ENCODE measurements at regions of chr5 and their contacts with region 1.

Region 1: DNA sequence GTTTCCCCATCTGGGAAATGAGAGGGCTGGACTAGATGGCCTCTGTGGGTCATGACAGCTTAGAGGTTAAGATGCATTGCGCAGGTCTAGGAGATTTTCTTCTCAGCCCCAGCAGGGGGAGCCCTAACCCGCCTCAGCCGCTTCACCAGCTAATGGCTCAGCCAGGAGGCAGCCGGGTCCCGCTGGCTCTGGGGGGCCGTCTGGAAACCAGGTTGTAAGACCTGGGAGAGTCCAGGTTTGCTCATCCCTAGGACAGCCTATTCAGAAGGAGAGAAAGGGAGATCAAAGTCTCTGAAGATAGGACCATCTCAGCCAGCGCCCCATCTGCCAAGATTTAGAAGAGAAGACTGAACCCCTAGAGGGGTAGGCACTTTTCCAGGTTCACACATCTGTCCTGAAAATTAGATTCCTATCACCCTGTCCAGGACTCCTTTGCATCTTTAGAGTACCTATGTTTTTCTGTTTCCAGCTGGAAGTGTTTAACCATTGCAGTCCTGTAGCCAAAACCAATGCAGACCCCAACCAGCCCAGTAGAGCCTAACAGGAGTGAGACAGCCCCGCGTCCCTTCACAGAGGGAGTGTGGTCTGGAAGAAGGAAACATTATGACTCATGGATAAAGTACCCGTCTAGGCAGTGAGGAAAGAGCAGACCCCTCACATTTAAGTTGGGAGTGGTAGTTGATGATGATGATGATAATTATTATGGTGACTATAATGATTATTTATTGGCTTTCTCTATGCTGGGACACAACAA is 27.5 kb downstream of the SPARC start:
- DNase-seq: peak; percentile 81
- H3K4me3 ChIP-seq: peak overlapping the region in 1 of 2 experiments; percentile 27; a peak in 1 of 4 replicates
- H3K27ac ChIP-seq: peak overlapping the region in 1 of 2 experiments; percentile 97; a peak in 2 of 4 replicates
- H3K4me1 ChIP-seq: peaks cover 5 to 12% of the 10 kb centered on the region in 2 experiments; a peak in 2 of 4 replicates
- H3K27me3 ChIP-seq: no peaks in the 10 kb centered on the region
- CTCF ChIP-seq: peak; percentile 89
- EP300 ChIP-seq: no peak
- RAD21 ChIP-seq: peak; percentile 96

Region 2: GRCh38 chr5:151675611-151676313 is 16.6 kb after region 1 on chr5:
- CTCF ChIA-PET with region 1: interaction called, 48 read pairs
- POLR2A ChIA-PET with region 1: no interaction called
- DNase-seq: no peak
- H3K4me3 ChIP-seq: no peak overlapping the region
- H3K27ac ChIP-seq: peak overlapping the region in 1 of 2 experiments; percentile 97; a peak in 3 of 4 replicates
- H3K4me1 ChIP-seq: peaks cover 16 to 78% of the 10 kb centered on the region in 2 experiments
- H3K27me3 ChIP-seq: no peaks in the 10 kb centered on the region
- CTCF ChIP-seq: no peak
- EP300 ChIP-seq: no peak
- RAD21 ChIP-seq: no peak

Region 3: DNA sequence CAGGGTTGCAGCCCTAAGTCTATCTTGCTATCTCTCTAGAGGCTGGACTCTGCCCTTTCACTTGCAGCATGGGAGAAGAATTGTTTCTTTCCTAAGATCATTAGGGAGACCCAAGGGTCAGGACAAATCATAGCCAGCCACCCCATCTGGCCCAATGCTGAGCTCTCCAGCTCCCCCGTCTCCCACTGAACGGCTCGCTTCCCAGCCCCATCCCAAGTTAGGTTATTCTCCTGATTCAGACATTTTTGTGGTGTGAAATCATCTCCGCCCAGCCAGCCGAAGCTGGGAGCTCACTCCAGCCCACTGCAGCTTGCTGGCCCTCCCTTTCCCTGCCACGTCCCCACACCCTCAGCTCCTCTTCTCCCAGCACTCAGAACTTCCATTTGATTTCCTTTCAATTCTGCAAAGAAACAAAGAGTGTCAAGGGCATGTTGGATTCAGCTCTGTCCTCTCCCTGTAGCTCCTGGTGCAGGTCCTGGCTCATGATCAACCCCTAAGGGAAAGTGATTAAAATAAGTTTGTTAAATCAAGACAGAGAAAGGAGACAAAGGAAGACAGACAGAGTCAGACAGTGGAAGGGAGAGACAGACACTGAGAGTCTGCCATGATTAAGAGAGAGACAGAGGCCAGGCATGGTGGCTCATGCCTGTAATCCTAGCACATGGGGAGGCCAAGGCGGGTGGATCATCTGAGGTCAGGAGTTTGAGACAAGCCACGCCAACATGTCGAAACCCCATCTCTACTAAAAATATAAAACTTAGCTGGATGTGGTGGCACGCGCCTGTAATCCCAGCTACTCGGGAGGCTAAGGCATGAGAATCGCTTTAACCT is 40.1 kb after region 1 on chr5:
- CTCF ChIA-PET with region 1: interaction called, 23 read pairs
- POLR2A ChIA-PET with region 1: no interaction called
- DNase-seq: no peak
- H3K4me3 ChIP-seq: no peak overlapping the region
- H3K27ac ChIP-seq: peak overlapping the region; percentile 83 to 100
- H3K4me1 ChIP-seq: peaks cover 24 to 26% of the 10 kb centered on the region in 2 experiments
- H3K27me3 ChIP-seq: no peaks in the 10 kb centered on the region
- CTCF ChIP-seq: no peak
- EP300 ChIP-seq: peak in 1 of 2 experiments; percentile 83; a peak in 1 of 4 replicates
- RAD21 ChIP-seq: no peak

Region 4: GRCh38 chr5:151751091-151751490 is 91.9 kb after region 1 on chr5:
- CTCF ChIA-PET with region 1: interaction called, 375 read pairs
- POLR2A ChIA-PET with region 1: no interaction called
- DNase-seq: no peak
- H3K4me3 ChIP-seq: no peak overlapping the region
- H3K27ac ChIP-seq: no peak overlapping the region
- H3K4me1 ChIP-seq: no peaks in the 10 kb centered on the region
- H3K27me3 ChIP-seq: no peaks in the 10 kb centered on the region
- CTCF ChIP-seq: no peak
- EP300 ChIP-seq: no peak
- RAD21 ChIP-seq: no peak

Region 5: DNA sequence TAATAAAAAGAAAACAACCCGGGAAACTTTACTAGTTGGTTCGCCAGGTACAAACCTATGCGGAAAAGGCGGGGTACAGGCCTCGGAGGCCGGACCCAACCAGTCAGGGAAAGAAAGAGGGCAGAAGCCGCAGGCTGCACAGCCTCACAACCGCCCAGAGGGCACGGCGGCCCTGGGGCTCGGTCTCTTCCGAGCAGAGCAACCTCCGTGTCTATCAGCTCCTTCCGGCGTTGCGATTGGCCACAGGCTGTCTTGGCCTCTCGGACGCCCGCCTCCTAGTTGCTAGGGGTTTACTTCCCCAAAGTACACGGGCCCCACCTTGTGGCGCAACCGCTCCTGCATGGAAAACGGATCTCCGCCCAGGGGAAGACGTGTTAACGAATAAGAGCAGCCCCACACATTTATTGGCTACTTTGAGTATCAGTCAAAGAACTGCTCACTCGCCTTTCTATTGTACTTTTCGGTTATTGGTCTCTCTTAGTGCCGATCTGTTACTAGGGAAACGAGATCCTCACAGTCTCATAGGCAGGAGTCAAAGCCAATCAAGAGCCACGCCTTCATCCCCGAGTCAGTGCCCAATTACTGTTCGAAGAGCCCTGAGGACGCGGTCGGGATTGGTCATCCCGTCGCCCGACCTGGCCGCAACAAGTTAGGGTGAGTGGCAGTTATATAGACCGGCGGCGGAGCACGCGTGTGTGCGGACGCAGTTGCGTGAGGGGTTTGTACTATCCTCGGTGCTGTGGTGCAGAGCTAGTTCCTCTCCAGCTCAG is 112.3 kb after region 1 on chr5 and contains the start of gene G3BP1:
- CTCF ChIA-PET with region 1: interaction called, 20 read pairs
- POLR2A ChIA-PET with region 1: interaction called, 7 read pairs
- DNase-seq: peak; percentile 96
- H3K4me3 ChIP-seq: peak within 1 kb of the TSS; percentile 77 to 92
- H3K27ac ChIP-seq: peak within 1 kb of the TSS; percentile 87 to 94
- H3K4me1 ChIP-seq: peaks cover 19 to 31% of the 10 kb centered on the region in 2 experiments; a peak in 3 of 4 replicates
- H3K27me3 ChIP-seq: no peaks in the 10 kb centered on the region
- CTCF ChIP-seq: peak; percentile 71
- EP300 ChIP-seq: no peak
- RAD21 ChIP-seq: peak; percentile 76
- polyA plus RNA-seq, gene G3BP1: 21.7 and 25.1 TPM in 2 replicates